ENCODE measurements at regions of chr6 and their contacts with region 1.

Region 1: DNA sequence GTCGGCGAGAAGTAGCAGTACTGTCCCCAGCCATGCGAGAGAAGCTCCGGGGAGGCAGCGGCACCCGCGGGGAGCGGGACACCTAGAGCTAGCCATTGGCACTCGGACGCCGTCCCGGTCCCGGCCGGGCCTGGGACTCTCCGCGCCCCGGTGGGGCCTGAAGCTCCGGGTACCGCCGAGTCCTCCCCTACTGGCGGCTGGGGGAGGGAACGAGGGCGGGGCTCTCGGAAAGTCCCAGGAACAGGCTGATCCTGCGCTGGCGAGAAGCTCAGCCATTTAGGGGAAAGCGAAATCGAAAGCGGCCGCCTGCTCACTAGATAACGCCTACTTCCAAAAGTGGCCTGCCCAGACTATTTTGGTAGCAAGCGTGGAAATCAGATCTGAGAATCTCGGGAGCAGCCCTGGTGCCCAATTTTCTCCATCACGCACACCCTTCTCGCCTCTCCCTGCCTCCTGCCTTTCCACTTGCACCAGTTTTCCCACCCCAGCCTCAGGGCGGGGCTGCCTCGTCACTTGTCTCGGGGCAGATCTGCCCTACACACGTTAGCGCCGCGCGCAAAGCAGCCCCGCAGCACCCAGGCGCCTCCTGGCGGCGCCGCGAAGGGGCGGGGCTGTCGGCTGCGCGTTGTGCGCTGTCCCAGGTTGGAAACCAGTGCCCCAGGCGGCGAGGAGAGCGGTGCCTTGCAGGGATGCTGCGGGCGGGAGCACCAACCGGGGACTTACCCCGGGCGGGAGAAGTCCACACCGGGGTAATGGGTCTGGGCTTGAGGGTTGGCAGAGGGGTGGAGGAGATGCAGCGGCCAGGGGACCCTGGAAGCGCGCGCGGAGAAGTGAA is at the starts of genes PSMB9 and TAP1:
- DNase-seq: peak; percentile 96 to 97 (median 97)
- ATAC-seq: peak; percentile 95 to 96 (median 96)
- H3K4me3 ChIP-seq: peak within 1 kb of the TSS; percentile 69 to 99 (median 90)
- H3K27ac ChIP-seq: peak within 1 kb of the TSS; percentile 90 to 100 (median 99)
- H3K4me1 ChIP-seq: peaks cover 0 to 77% (median 24%) of the 10 kb centered on the region in 12 donors
- H3K27me3 ChIP-seq: no peaks in the 10 kb centered on the region
- CTCF ChIP-seq: peak; percentile 59 to 92 (median 86)
- POLR2A ChIP-seq: peak; percentile 63 to 93
- total RNA-seq, gene PSMB9: 8.9 to 182 (median 14.6) TPM
- total RNA-seq, gene TAP1: 15.1 to 207 (median 20.3) TPM

Region 2: DNA sequence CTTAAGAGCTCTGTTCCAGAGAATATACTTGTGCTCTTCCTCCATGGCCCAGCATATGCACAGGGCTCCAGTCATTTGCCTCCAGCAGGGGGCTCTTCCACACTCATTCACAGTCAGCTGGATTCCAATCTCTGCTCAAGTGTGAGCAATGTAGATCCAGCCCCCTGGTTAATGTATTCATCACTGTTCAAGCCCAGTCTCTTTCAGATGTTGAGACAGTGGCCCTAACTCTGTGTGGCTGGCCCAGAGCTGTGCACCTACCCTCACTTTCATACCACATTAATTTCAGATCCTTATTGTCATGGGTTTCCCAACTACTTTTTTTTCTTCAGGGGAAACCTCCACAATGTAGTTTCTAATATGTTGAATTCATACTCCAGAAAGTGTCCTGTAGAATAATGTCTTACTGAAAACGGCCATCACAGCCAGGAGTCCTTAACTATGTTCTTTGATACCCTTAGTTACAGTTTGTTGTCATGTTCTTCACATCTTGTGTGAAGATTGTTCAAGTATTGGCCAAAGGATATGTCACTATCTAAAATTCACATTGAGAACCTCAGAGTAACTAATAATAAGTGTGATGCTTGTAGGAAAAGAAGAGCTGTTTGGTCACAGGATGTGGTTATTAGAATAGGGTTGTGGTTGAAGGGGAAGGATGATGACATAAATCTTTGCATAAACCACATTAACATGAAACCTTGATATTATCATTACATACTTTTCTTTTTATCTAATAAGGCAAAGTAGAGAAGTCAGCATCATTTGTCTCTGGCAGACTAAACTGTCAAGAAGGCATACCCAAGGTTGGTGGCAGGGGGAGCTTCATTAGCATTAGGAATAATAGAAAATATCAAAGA is 231.0 kb before region 1 on chr6:
- intact Hi-C with region 1: no loop called
- DNase-seq: peak in 3 of 5 donors; percentile 26 to 58 (median 28)
- ATAC-seq: peak in 3 of 4 donors; percentile 67 to 87 (median 76)
- H3K4me3 ChIP-seq: no peak overlapping the region
- H3K27ac ChIP-seq: peak overlapping the region in 2 of 12 donors; percentile 41 to 72
- H3K4me1 ChIP-seq: peaks cover 0 to 14% (median 0%) of the 10 kb centered on the region in 12 donors
- H3K27me3 ChIP-seq: no peaks in the 10 kb centered on the region
- CTCF ChIP-seq: peak in 9 of 12 donors; percentile 29 to 63 (median 47)
- POLR2A ChIP-seq: no peak

Region 3: DNA sequence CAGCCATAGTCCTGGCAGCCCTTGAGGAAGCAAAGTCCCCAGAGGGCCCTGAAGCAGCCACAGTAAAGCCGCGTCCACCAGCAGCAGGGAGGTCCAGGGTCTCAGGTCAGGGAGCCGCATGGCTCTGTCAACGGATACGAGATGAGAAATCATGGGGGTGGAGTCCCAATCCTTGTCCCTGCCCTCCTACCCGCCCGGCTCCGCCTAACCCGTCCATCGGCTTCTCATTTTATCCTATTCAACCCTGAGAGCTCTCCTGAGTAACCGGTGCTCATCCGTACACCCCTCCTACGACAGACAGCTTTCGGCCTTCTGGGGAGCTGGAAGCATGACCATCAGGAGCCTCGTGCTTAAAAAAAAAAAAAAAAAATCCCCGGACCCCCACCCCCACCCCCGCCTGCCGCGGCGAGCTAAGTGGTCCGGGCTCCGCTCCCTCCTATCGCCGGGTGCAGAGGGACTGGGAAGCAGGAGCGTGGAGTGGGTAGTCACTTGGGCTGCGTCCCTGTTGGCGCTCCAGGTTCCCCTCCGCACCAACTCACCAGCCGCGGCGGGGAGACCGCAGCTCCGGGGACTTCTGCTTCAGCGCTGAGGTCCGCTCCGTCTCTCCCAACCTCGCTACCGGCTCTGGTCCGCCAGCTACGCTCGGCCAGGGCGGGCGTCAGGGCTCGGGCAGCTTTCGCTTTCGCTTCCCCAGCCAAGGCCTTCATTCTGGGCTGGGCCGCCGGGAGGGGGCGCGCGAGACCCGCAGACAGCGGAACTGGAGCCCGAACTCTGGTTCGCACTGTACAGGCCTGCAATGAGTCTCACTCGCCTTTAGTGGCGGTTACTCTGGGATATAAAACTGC is 15.4 kb before region 1 on chr6 and contains the start of gene TAP2:
- intact Hi-C with region 1: loop called in 7 of 10 experiments (anchors 1 to 2 kb)
- DNase-seq: peak; percentile 95 to 98 (median 96)
- ATAC-seq: peak; percentile 95 to 97 (median 96)
- H3K4me3 ChIP-seq: peak within 1 kb of the TSS; percentile 60 to 96 (median 78)
- H3K27ac ChIP-seq: peak within 1 kb of the TSS; percentile 69 to 100 (median 96)
- H3K4me1 ChIP-seq: peaks cover 0 to 60% (median 19%) of the 10 kb centered on the region in 12 donors
- H3K27me3 ChIP-seq: no peaks in the 10 kb centered on the region
- CTCF ChIP-seq: peak; percentile 92 to 99 (median 97)
- POLR2A ChIP-seq: peak in 1 of 2 donors; percentile 35
- total RNA-seq, gene TAP2: 5.4 to 107 (median 14.9) TPM

Measured in heart left ventricle (tissue), 16 donors.